ENCODE measurements at regions of chr19 and their contacts with region 1.

Region 1: DNA sequence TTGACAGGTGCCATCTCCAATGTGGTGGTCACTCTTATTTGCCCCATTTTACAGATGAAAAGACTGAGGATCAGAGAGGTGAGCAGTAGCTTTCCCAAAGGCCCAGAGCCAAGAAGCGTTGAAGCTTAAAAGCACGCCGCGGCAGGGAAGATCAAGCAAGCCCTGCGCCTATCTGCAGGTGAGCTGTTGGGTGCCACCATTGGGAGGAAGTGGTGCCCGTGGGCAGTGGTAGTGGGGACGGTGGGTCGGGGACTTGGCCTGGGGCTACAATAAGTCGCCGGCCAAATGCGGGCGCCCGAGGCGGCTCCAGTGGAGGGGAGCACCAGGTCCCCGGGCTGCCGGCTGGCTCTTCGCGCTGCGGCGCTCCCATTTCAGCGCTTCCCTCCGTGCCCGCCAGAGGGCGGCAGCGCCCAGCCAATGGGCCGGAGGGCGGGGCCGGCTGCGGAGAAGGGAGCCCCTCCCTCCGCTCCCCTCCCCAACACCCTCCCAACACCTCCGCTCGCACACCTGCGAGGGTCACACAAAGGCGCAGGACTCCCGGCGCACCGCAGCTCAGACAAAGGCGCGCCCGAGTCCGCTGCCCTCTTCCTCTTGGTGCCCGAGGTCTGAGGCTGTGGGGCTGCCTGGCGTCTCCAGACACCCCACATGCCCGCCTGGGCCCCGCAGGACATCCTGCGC is 744 bp upstream of the POU2F2 start:
- DNase-seq: peak; percentile 45
- H3K4me3 ChIP-seq: peak overlapping the region in 1 of 3 experiments; percentile 23
- H3K27ac ChIP-seq: no peak overlapping the region
- H3K4me1 ChIP-seq: peaks cover 6% of the 10 kb centered on the region
- H3K27me3 ChIP-seq: no peaks in the 10 kb centered on the region
- CTCF ChIP-seq: peak; percentile 83 to 99
- POLR2A ChIP-seq: no peak

Region 2: DNA sequence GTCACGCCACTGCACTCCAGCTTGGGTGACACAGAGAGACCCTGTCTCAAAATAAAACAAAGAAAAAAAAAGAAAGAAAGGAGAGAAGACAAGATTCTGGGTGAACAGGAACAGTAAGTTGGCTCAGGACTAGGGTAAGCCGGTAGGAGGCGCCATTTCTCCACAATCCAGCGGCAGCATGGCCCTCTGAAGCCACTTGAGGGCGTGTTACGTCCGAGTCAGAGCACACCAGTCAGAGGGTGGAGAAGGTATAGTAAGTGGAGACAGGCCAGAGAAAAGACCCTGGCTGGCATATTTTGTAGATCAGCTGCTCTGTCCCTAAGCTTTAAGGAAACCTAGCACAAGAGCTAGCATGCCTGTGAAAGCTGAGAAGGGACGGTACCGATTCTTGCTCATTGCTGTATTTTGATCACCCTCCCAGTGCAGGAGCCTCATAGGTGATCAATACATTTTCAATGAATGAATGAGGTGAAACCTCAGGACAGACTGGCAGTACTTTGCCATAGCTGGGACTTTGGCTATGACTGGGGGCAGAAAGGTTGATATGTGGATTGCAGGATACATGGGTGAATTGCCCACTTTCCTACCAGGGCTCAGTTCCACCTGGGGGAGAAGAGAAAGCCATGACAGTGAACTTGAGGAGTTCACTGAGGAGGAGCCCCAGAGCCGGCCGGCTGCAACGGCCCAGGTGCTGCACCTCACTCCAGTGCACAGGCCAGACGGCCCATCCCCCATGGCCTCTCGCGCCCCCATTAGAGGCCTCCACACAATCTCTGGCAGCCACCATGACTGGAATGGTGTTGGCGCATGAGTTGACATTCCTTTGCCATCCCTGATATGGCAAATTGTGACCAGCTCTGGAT is 24.2 kb before region 1 on chr19:
- CTCF ChIA-PET with region 1: interaction called, 33 read pairs
- POLR2A ChIA-PET with region 1: no interaction called
- dilution Hi-C with region 1: no loop called
- intact Hi-C with region 1: loop called (anchors 1 kb)
- DNase-seq: peak; percentile 90
- H3K4me3 ChIP-seq: no peak overlapping the region
- H3K27ac ChIP-seq: no peak overlapping the region
- H3K4me1 ChIP-seq: peaks cover 20% of the 10 kb centered on the region
- H3K27me3 ChIP-seq: peaks cover 3% of the 10 kb centered on the region in 2 experiments
- CTCF ChIP-seq: peak; percentile 99 to 100
- POLR2A ChIP-seq: no peak

Region 3: GRCh38 chr19:42121656-42122069 is 11.3 kb before region 1 on chr19:
- CTCF ChIA-PET with region 1: interaction called, 18 read pairs
- POLR2A ChIA-PET with region 1: no interaction called
- dilution Hi-C with region 1: no loop called
- intact Hi-C with region 1: loop called (anchors 1 kb)
- DNase-seq: peak; percentile 93
- H3K4me3 ChIP-seq: no peak overlapping the region
- H3K27ac ChIP-seq: peak overlapping the region; percentile 86
- H3K4me1 ChIP-seq: peaks cover 21% of the 10 kb centered on the region
- H3K27me3 ChIP-seq: no peaks in the 10 kb centered on the region
- CTCF ChIP-seq: no peak
- POLR2A ChIP-seq: peak; percentile 18

Region 4: GRCh38 chr19:42184401-42184861 is 51.4 kb after region 1 on chr19:
- CTCF ChIA-PET with region 1: interaction called, 21 read pairs
- POLR2A ChIA-PET with region 1: no interaction called
- dilution Hi-C with region 1: no loop called
- intact Hi-C with region 1: loop called (anchors 1 kb)
- DNase-seq: peak; percentile 75
- H3K4me3 ChIP-seq: no peak overlapping the region
- H3K27ac ChIP-seq: no peak overlapping the region
- H3K4me1 ChIP-seq: no peaks in the 10 kb centered on the region
- H3K27me3 ChIP-seq: peaks cover 17 to 28% of the 10 kb centered on the region in 2 experiments
- CTCF ChIP-seq: peak; percentile 76 to 91
- POLR2A ChIP-seq: no peak

Region 5: GRCh38 chr19:42295831-42296525 is 163.0 kb after region 1 on chr19:
- CTCF ChIA-PET with region 1: no interaction called
- POLR2A ChIA-PET with region 1: no interaction called
- dilution Hi-C with region 1: no loop called
- intact Hi-C with region 1: loop called (anchors 1 kb)
- DNase-seq: peak; percentile 72
- H3K4me3 ChIP-seq: no peak overlapping the region
- H3K27ac ChIP-seq: no peak overlapping the region
- H3K4me1 ChIP-seq: no peaks in the 10 kb centered on the region
- H3K27me3 ChIP-seq: no peaks in the 10 kb centered on the region
- CTCF ChIP-seq: peak; percentile 92 to 97
- POLR2A ChIP-seq: no peak

Region 6: GRCh38 chr19:42396381-42397262 is 263.6 kb after region 1 on chr19:
- CTCF ChIA-PET with region 1: interaction called, 5 read pairs
- POLR2A ChIA-PET with region 1: no interaction called
- dilution Hi-C with region 1: no loop called
- intact Hi-C with region 1: loop called (anchors 5 kb)
- DNase-seq: peak; percentile 100
- H3K4me3 ChIP-seq: peak overlapping the region; percentile 36 to 73 (median 49)
- H3K27ac ChIP-seq: peak overlapping the region; percentile 77
- H3K4me1 ChIP-seq: peaks cover 17% of the 10 kb centered on the region
- H3K27me3 ChIP-seq: no peaks in the 10 kb centered on the region
- CTCF ChIP-seq: no peak
- POLR2A ChIP-seq: peak; percentile 87